Sigmoid colon (tissue), 7 donors: ENCODE measurements at regions of chr7 and their contacts with region 1.

Region 1: GRCh38 chr7:77798394-77799077 is at the starts of genes PHTF2 and TMEM60:
- DNase-seq: peak; percentile 99
- H3K4me3 ChIP-seq: peak within 1 kb of the TSS; percentile 71 to 95 (median 78)
- H3K27ac ChIP-seq: peak within 1 kb of the TSS; percentile 88 to 94 (median 91)
- H3K4me1 ChIP-seq: peaks cover 0 to 30% (median 27%) of the 10 kb centered on the region in 4 donors
- H3K27me3 ChIP-seq: no peaks in the 10 kb centered on the region
- CTCF ChIP-seq: peak; percentile 35 to 54 (median 46)
- EP300 ChIP-seq: peak in 2 of 4 donors; percentile 39 to 55
- POLR2A ChIP-seq: peak in 1 of 2 donors; percentile 69
- total RNA-seq, gene PHTF2: 17.4 to 19.3 (median 18.6) TPM
- total RNA-seq, gene TMEM60: 5.7 to 14.5 (median 10.6) TPM

Region 2: DNA sequence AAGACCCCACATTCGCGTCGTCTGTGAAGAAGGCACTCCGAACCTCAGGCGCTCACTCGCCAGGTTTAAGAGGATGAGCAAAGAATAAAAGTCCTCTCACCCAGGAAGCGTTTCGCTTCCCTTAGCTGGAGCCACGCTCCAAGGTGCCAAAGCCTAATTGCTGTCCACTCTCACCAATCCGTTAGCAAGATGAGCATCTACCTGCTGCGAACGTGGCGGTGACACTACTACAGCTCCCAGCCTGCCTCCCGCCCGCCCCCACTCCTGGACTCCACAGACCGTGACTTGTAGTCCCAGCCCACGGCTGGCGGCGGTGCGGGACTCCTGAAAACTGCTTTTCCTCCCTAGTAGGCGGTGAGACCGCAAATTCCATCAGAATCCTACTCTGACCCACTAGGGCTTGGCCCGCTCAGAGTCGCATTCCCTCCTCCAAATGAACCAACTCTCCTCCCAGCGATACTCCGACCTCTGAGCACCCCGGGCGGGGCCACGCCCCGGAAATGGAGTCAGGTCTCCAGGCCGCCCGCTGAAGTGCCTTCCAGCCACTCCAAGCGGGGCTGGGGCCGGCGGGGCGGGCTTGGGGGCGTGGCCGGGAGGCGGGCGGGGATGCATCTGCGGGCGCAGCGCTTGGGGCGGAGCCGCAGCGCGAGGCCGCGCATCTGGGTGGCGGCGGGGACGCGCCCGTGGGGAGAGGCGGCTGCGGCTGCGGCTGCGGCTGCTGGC is 262.0 kb before region 1 on chr7:
- intact Hi-C with region 1: loop called (anchors 5 kb)
- DNase-seq: peak; percentile 98
- H3K4me3 ChIP-seq: peak overlapping the region; percentile 65 to 95 (median 80)
- H3K27ac ChIP-seq: peak overlapping the region; percentile 93 to 98 (median 96)
- H3K4me1 ChIP-seq: peaks cover 0 to 33% (median 25%) of the 10 kb centered on the region in 4 donors
- H3K27me3 ChIP-seq: no peaks in the 10 kb centered on the region
- CTCF ChIP-seq: no peak
- EP300 ChIP-seq: no peak
- POLR2A ChIP-seq: peak; percentile 86 to 96

Region 3: GRCh38 chr7:77759294-77759889 is 39.1 kb before region 1 on chr7:
- intact Hi-C with region 1: loop called (anchors 5 kb)
- DNase-seq: no peak
- H3K4me3 ChIP-seq: no peak overlapping the region
- H3K27ac ChIP-seq: peak overlapping the region in 3 of 4 donors; percentile 0 to 43 (median 35)
- H3K4me1 ChIP-seq: peaks cover 0 to 74% (median 31%) of the 10 kb centered on the region in 4 donors
- H3K27me3 ChIP-seq: no peaks in the 10 kb centered on the region
- CTCF ChIP-seq: peak; percentile 66 to 85 (median 80)
- EP300 ChIP-seq: no peak
- POLR2A ChIP-seq: no peak

Region 4: GRCh38 chr7:77923419-77923818 is 124.9 kb after region 1 on chr7:
- intact Hi-C with region 1: loop called (anchors 10 kb)
- DNase-seq: no peak
- H3K4me3 ChIP-seq: no peak overlapping the region
- H3K27ac ChIP-seq: no peak overlapping the region
- H3K4me1 ChIP-seq: no peaks in the 10 kb centered on the region
- H3K27me3 ChIP-seq: no peaks in the 10 kb centered on the region
- CTCF ChIP-seq: no peak
- EP300 ChIP-seq: no peak
- POLR2A ChIP-seq: no peak

Region 5: GRCh38 chr7:78020136-78020873 is 221.8 kb after region 1 on chr7:
- intact Hi-C with region 1: loop called (anchors 5 kb)
- DNase-seq: peak; percentile 80
- H3K4me3 ChIP-seq: peak overlapping the region; percentile 41 to 61 (median 58)
- H3K27ac ChIP-seq: peak overlapping the region; percentile 96 to 97 (median 97)
- H3K4me1 ChIP-seq: peaks cover 0 to 30% (median 14%) of the 10 kb centered on the region in 4 donors
- H3K27me3 ChIP-seq: no peaks in the 10 kb centered on the region
- CTCF ChIP-seq: peak in 3 of 4 experiments; percentile 36 to 71 (median 43)
- EP300 ChIP-seq: no peak
- POLR2A ChIP-seq: no peak